ENCODE measurements at regions of chr5 and their contacts with region 1.

Region 1: GRCh38 chr5:157533011-157533481 is 42.5 kb downstream of the ADAM19 start:
- DNase-seq: no peak
- H3K4me3 ChIP-seq: no peak overlapping the region
- H3K27ac ChIP-seq: peak overlapping the region; percentile 25 to 65 (median 38)
- H3K4me1 ChIP-seq: peaks cover 2 to 22% (median 12%) of the 10 kb centered on the region in 4 donors
- H3K27me3 ChIP-seq: no peaks in the 10 kb centered on the region
- CTCF ChIP-seq: no peak
- EP300 ChIP-seq: no peak
- POLR2A ChIP-seq: no peak

Region 2: DNA sequence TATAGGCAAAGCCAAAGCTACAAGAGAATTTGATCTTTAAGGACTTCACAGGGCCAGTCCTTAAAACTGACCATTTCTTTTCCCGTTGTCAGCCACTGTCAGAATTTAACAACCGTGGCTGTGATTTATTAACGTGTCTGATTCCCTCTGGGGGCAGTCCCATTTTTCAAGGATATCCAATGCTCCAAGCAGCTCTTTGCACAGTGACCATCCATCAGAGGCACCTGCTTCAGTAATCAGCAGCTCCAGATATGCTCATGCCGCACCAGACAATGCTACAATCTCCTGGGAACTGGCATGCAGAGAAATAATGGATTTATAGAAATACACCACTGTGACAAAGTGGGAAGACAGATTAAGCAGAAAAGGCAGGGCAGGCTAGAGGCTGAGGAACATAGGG is 846.2 kb before region 1 on chr5:
- in situ Hi-C with region 1: no loop called
- intact Hi-C with region 1: loop called (anchors 5 kb)
- DNase-seq: no peak
- H3K4me3 ChIP-seq: no peak overlapping the region
- H3K27ac ChIP-seq: no peak overlapping the region
- H3K4me1 ChIP-seq: no peaks in the 10 kb centered on the region
- H3K27me3 ChIP-seq: no peaks in the 10 kb centered on the region
- CTCF ChIP-seq: no peak
- EP300 ChIP-seq: no peak
- POLR2A ChIP-seq: no peak

Region 3: DNA sequence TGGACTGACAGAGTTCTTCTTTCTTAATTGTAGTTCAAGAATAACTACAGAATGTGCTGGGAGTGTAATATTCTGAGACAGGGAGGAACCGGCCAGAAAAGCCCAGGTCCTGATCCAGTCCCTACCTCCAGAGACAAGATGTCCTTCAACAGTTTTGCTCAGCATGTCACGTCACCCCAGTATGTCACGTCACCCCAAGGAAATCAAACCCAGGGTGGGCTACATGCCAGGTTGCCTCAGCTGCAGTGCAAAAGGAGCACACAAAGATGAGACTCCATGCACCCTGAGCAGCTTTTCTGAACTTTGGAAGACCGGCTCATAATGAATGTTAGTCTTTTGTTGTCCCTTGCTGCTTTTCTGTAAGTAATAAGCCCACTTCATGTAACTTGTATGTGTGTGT is 99.0 kb before region 1 on chr5:
- in situ Hi-C with region 1: no loop called
- intact Hi-C with region 1: no loop called
- DNase-seq: no peak
- H3K4me3 ChIP-seq: no peak overlapping the region
- H3K27ac ChIP-seq: no peak overlapping the region
- H3K4me1 ChIP-seq: peaks cover 0 to 9% (median 0%) of the 10 kb centered on the region in 4 donors
- H3K27me3 ChIP-seq: no peaks in the 10 kb centered on the region
- CTCF ChIP-seq: no peak
- EP300 ChIP-seq: no peak
- POLR2A ChIP-seq: no peak

Region 4: DNA sequence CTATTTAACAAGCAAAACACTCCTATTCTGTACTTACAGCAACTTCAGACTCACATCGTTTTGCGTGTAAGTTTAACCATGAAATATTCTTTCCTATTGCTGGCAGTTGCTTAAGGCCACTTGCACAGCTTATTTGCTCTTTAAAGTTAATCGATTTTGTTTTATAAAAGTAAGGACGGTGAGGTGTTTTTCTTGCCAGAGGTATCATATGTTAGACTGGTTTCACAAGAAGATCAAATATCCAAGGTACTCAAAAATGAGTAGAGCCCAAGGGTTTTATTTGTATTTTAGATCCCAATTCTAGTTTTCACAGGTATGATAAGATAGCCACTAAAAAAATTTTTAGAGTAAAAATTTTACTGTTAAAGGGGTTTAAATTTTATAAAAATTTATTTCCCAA is 309.7 kb after region 1 on chr5:
- in situ Hi-C with region 1: no loop called
- intact Hi-C with region 1: no loop called
- DNase-seq: no peak
- H3K4me3 ChIP-seq: no peak overlapping the region
- H3K27ac ChIP-seq: no peak overlapping the region
- H3K4me1 ChIP-seq: peaks cover 0 to 4% (median 0%) of the 10 kb centered on the region in 4 donors
- H3K27me3 ChIP-seq: no peaks in the 10 kb centered on the region
- CTCF ChIP-seq: no peak
- EP300 ChIP-seq: no peak
- POLR2A ChIP-seq: no peak

Region 5: GRCh38 chr5:157877821-157878220 is 344.8 kb after region 1 on chr5:
- in situ Hi-C with region 1: no loop called
- intact Hi-C with region 1: no loop called
- DNase-seq: no peak
- H3K4me3 ChIP-seq: no peak overlapping the region
- H3K27ac ChIP-seq: no peak overlapping the region
- H3K4me1 ChIP-seq: no peaks in the 10 kb centered on the region
- H3K27me3 ChIP-seq: no peaks in the 10 kb centered on the region
- CTCF ChIP-seq: no peak
- EP300 ChIP-seq: no peak
- POLR2A ChIP-seq: no peak

Measured in transverse colon (tissue), 4 donors.